ENCODE measurements at regions of chr11 and their contacts with region 1.

Region 1: GRCh38 chr11:96228473-96228891 is 114.5 kb downstream of the MAML2 start:
- DNase-seq: no peak
- ATAC-seq: no peak
- H3K4me3 Mint-ChIP-seq: no peak overlapping the region
- H3K27ac Mint-ChIP-seq: no peak overlapping the region
- H3K4me1 Mint-ChIP-seq: peaks cover 30% of the 10 kb centered on the region
- H3K27me3 Mint-ChIP-seq: no peaks in the 10 kb centered on the region

Region 2: DNA sequence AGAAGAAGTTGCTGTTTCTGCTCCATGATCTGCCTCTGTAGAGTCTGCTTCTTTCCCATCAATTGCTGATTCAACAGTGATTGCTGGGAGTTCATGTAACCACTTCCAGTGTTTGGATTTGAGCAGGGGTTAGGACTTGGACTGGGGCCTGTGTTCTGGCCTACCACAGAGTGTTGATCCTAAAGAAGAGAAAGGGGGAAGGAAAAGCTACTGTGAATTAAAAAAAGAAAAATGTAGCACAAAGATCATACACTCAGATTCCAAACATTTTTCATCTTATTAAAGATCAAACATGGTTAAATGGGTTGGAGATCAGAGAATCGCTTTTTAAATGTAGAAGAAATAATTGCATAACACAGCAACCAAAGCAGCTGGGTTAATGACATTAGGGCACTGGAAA is 236.9 kb before region 1 on chr11:
- CTCF ChIA-PET with region 1: no interaction called
- POLR2A ChIA-PET with region 1: no interaction called
- DNase-seq: no peak
- ATAC-seq: no peak
- H3K4me3 Mint-ChIP-seq: no peak overlapping the region
- H3K27ac Mint-ChIP-seq: no peak overlapping the region
- H3K4me1 Mint-ChIP-seq: peaks cover 3% of the 10 kb centered on the region
- H3K27me3 Mint-ChIP-seq: no peaks in the 10 kb centered on the region

Region 3: GRCh38 chr11:96168623-96169022 is 59.9 kb before region 1 on chr11:
- CTCF ChIA-PET with region 1: no interaction called
- POLR2A ChIA-PET with region 1: no interaction called
- DNase-seq: no peak
- ATAC-seq: no peak
- H3K4me3 Mint-ChIP-seq: no peak overlapping the region
- H3K27ac Mint-ChIP-seq: no peak overlapping the region
- H3K4me1 Mint-ChIP-seq: peaks cover 24% of the 10 kb centered on the region
- H3K27me3 Mint-ChIP-seq: no peaks in the 10 kb centered on the region

Region 4: DNA sequence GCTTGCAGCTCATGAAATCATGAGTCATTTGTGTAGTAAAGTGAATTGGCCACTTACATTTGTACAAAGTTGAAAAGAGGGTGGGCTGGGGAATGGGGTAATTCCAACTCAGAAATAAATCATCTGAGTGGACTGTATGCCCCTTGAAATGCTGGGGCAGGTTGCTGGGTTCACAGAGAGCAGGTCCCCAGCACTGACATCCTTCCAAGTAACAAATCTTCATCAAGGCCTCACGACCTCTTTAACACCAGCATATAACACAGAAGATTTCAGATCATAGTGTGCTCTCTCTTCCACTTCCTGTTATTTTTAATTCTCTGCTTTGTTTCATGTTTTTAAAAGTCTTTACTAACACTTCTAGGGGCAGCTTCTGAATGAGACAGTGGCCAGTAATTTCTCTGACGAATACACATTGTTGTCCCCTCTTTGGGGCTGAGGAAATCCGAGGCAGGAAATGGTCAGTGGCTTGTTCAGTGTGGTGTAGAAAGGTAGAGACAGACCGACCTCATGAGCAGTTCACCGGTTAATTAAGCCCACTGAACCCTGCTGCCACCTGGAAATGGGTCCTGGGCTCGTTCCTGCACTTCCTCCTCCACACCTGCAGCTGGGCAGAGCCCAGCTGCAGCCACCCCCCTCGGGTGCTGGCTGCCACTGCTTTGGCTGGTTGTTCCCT is 13.2 kb before region 1 on chr11:
- CTCF ChIA-PET with region 1: interaction called, 12 read pairs
- POLR2A ChIA-PET with region 1: interaction called, 7 read pairs
- DNase-seq: peak; percentile 67
- ATAC-seq: peak; percentile 81
- H3K4me3 Mint-ChIP-seq: peak overlapping the region; percentile 51
- H3K27ac Mint-ChIP-seq: peak overlapping the region; percentile 94
- H3K4me1 Mint-ChIP-seq: peaks cover 78% of the 10 kb centered on the region
- H3K27me3 Mint-ChIP-seq: no peaks in the 10 kb centered on the region

Region 5: DNA sequence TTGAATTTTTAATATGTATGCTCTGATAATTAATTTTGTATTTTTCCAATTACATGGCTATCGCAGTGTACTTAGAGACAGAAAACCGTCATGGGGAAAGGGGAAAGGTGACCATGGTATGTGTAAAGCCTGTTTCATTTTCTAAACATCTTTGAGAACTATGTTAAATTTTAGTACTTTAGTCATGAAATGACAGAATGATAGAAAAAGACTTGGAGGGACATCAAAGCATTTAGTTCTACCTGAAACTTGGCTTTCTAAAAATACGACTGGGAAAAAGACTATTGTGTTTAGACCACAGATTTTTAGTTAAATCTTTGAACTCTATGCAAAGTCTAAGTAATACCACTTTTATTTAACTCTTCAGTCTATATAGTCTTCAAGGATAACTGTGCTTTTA is 60.4 kb after region 1 on chr11:
- CTCF ChIA-PET with region 1: no interaction called
- POLR2A ChIA-PET with region 1: no interaction called
- DNase-seq: no peak
- ATAC-seq: no peak
- H3K4me3 Mint-ChIP-seq: no peak overlapping the region
- H3K27ac Mint-ChIP-seq: no peak overlapping the region
- H3K4me1 Mint-ChIP-seq: peaks cover 63% of the 10 kb centered on the region
- H3K27me3 Mint-ChIP-seq: no peaks in the 10 kb centered on the region

Measured in activated CD8-positive, alpha-beta T cell treated with anti-CD3 and anti-CD28 coated beads, Interleukin-2, amount 10 ng/mL, durations not matched to agents 7 days and 5 days (primary cell).